ENCODE measurements at regions of chr11 and their contacts with region 1.

Region 1: DNA sequence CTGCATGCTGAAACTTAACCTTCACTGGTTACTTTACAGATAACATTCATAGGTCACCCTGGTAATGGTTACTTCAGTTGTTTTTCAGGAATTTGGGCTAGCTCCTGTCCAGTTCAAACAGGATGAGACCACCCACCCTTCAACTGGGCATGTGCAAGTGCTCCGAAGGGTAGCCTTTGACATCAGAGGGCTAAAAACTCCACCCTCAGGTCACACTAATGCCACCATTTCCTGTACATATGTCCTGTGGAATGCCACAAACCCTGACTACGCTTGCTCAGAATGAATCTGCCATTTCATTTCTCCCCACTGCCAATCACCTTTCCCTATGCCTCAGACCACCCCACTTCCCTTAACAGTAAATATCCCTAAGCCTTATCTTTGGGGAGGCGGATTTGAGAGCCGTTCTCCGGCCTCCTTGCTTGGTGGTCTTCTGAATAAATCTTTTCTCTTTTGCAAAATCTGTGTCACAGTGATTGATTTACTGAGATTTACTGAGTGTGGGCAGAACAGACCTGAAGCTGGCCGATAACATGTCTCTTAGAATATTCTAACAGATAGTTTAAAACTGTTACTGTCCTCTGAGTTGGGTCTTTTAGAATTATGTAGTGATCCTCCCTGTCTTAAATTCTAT is 25.4 kb upstream of the FXYD2 start:
- DNase-seq: no peak
- H3K4me3 ChIP-seq: no peak overlapping the region
- H3K27ac ChIP-seq: no peak overlapping the region
- H3K4me1 ChIP-seq: peaks cover 0 to 5% (median 2%) of the 10 kb centered on the region in 4 donors
- H3K27me3 ChIP-seq: no peaks in the 10 kb centered on the region
- CTCF ChIP-seq: no peak
- EP300 ChIP-seq: no peak
- POLR2A ChIP-seq: no peak

Region 2: DNA sequence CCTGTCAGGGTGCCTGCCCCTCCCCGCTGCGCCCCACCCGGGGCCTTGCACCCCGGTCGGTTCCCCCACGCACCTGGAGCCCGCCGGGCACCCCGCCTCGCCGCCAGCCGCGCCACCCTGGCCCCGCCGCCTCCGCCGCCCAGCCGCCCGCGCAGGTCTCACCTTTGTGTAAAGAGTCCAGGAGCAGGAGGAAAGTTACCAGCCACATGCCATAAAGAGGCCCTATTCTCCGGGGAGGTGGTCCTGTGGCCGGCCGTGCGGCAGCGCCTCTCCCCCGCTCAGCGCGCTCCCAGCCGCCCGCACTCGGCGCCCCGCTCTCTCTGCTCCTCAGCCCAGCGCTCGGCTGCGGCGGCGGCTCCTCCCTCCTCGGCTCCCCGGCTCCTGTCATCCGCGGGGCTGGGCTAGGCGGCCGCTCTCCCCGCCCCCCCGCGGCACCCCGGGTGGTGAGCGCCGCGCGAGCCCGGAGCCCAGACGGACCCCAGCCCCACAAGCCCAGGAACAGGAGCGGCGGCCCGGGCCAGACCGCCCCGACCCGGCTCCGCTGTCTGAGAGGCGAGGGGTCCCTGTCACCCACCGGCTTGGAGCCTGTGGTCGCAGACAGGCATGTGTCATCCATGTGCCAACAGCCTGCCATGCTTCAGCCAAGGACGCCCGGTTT is 52.9 kb before region 1 on chr11 and contains the start of gene DSCAML1:
- intact Hi-C with region 1: no loop called
- DNase-seq: no peak
- H3K4me3 ChIP-seq: peak within 1 kb of the TSS; percentile 42 to 55 (median 45)
- H3K27ac ChIP-seq: no peak within 1 kb of the TSS
- H3K4me1 ChIP-seq: peaks cover 17 to 28% (median 26%) of the 10 kb centered on the region in 4 donors
- H3K27me3 ChIP-seq: peaks cover 0 to 75% (median 33%) of the 10 kb centered on the region in 4 donors
- CTCF ChIP-seq: no peak
- EP300 ChIP-seq: no peak
- POLR2A ChIP-seq: no peak
- total RNA-seq, gene DSCAML1: 0.50 to 5.8 (median 1.2) TPM

Region 3: GRCh38 chr11:117900121-117900648 is 50.3 kb after region 1 on chr11:
- intact Hi-C with region 1: loop called (anchors 5 kb)
- DNase-seq: no peak
- H3K4me3 ChIP-seq: no peak overlapping the region
- H3K27ac ChIP-seq: no peak overlapping the region
- H3K4me1 ChIP-seq: no peaks in the 10 kb centered on the region
- H3K27me3 ChIP-seq: no peaks in the 10 kb centered on the region
- CTCF ChIP-seq: no peak
- EP300 ChIP-seq: no peak
- POLR2A ChIP-seq: no peak

Region 4: DNA sequence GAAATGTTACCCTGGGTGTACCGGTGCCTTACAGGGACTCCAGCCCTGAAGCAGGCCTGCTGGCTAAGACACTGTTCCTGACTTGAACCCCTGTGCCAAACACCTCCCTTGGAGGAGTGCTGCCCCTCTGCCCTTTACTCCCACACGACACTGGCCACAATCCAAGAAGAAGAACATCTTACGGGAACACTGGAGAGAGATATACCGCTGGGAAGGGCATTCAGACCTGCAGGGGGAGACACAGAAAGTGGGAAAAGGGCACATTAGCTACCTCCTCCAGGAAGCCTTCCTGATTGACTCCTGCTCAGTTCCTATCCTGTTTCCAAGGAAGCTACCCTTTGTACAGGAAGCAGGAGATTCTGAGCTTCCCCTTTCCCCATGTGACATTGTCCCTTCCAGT is 60.6 kb after region 1 on chr11:
- intact Hi-C with region 1: no loop called
- DNase-seq: no peak
- H3K4me3 ChIP-seq: no peak overlapping the region
- H3K27ac ChIP-seq: no peak overlapping the region
- H3K4me1 ChIP-seq: peaks cover 3 to 11% (median 9%) of the 10 kb centered on the region in 4 donors
- H3K27me3 ChIP-seq: peaks cover 0 to 15% (median 0%) of the 10 kb centered on the region in 4 donors
- CTCF ChIP-seq: no peak
- EP300 ChIP-seq: no peak
- POLR2A ChIP-seq: no peak

Region 5: DNA sequence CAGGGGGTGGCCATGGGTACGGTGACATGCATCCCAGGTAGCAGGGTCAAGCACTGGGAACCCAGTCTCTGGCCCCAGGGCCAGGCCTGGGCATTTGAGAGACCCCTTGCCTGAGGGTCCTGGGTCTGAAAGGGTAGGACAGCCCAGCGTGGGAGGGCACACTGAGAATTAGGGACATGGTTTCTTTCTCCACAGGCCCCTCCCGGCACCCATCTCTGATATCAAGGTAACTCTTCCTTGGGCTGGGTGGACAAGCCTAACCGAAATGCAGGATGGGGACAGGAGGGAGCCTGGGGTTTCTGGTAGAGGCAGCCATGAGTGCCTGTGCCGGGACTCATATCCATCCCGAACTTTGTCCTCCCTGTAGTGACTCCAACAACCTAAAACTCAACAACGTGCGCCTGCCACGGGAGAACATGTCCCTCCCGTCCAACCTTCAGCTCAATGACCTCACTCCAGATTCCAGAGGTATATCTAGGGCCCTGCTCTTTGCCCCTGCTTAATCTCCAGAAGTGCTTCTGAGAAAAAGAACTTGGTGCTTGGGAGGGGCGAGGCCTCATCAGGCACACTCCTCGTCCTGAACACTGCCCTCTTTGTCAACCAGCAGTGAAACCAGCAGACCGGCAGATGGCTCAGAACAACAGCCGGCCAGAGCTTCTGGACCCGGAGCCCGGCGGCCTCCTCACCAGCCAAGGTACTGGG is 683.9 kb after region 1 on chr11:
- intact Hi-C with region 1: no loop called
- DNase-seq: no peak
- H3K4me3 ChIP-seq: no peak overlapping the region
- H3K27ac ChIP-seq: no peak overlapping the region
- H3K4me1 ChIP-seq: peaks cover 15 to 40% (median 29%) of the 10 kb centered on the region in 4 donors
- H3K27me3 ChIP-seq: no peaks in the 10 kb centered on the region
- CTCF ChIP-seq: no peak
- EP300 ChIP-seq: no peak
- POLR2A ChIP-seq: no peak

Measured in esophagus muscularis mucosa (tissue), 4 donors.